HCT116 (cell line): ENCODE measurements at regions of chr21 and their contacts with region 1.

Region 1: DNA sequence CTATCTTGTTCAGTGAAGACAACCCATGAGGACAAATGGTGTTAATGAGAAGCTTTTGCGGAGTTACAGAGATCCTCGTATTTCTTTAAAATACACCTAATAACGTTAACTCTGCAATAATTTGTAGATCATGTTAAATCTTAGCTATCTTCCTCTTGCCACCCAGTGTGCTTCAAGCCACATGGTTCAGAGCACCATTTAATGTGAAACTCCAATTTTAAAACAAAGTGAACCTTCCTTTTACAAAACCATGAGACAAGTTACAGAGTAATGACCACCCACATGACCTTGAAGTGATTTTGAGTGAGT is 1.7 kb upstream of the KCNE2 start:
- DNase-seq: no peak
- ATAC-seq: peak; percentile 51
- H3K4me3 ChIP-seq: no peak overlapping the region
- H3K27ac ChIP-seq: no peak overlapping the region
- H3K4me1 ChIP-seq: peaks cover 4 to 7% of the 10 kb centered on the region in 2 experiments
- H3K27me3 ChIP-seq: no peaks in the 10 kb centered on the region
- CTCF ChIP-seq: no peak
- POLR2A ChIP-seq: no peak
- RAD21 ChIP-seq: no peak

Region 2: DNA sequence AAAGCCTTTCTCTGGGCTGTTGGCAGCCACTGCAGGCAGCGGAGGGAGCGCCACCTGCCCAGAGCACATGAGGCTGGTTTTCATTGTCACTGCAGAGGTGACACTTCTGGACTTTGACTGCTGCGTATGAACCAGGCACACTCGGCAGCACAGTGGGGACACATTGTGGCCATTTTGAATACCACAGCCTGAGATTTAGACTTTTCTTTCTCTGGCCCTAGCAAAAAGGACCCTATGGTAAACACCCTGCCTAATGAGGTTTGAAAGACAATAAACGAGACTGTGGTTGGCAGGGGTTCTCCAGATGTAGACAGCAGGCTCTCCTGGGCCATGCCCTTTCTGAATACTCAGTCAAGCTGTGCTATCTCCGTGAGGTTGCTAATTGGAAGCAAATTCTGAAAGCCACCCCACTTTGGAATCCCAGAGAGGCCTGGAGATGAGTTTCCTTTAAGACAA is 10.3 kb before region 1 on chr21:
- CTCF ChIA-PET with region 1: interaction called, 13 read pairs
- POLR2A ChIA-PET with region 1: no interaction called
- RAD21 ChIA-PET with region 1: no interaction called
- intact Hi-C with region 1: no loop called
- DNase-seq: peak; percentile 48
- ATAC-seq: peak; percentile 92
- H3K4me3 ChIP-seq: no peak overlapping the region
- H3K27ac ChIP-seq: no peak overlapping the region
- H3K4me1 ChIP-seq: peaks cover 0 to 4% of the 10 kb centered on the region in 2 experiments; a peak in 1 of 4 replicates
- H3K27me3 ChIP-seq: no peaks in the 10 kb centered on the region
- CTCF ChIP-seq: peak; percentile 63 to 70 (median 68); a peak in 5 of 6 replicates
- POLR2A ChIP-seq: no peak
- RAD21 ChIP-seq: peak; percentile 80

Region 3: DNA sequence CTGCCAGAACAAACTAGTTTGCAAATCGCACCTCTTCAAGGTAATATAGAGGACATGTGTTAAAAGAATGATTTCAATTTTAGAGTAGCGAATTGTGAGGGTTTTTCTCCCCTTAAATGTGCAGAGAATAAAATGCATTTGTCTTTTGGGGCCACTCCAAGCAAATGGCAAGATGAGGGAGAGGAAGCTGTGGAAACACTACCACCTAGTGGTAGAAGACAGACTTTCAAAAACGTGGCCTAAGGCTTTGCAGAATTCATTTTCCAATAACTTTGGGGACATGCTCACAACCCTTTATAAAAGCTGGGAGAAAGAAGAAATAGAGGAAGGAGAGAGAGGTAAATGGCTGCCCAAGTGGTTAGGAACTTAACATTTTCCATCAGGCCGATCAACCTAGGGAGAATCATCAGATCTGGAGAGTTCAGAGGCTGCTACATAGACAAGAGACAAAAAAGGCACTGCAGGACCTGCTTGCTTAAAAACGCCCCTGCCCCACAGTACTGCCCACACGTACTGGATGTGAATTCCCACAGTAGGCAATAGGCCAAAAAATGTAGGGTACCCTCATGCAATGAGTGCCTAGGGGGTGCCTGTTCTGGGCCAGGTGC is 268.6 kb after region 1 on chr21:
- CTCF ChIA-PET with region 1: interaction called, 7 read pairs
- POLR2A ChIA-PET with region 1: no interaction called
- RAD21 ChIA-PET with region 1: no interaction called
- intact Hi-C with region 1: loop called (anchors 1 kb)
- DNase-seq: peak; percentile 45
- ATAC-seq: peak; percentile 86
- H3K4me3 ChIP-seq: no peak overlapping the region
- H3K27ac ChIP-seq: no peak overlapping the region
- H3K4me1 ChIP-seq: no peaks in the 10 kb centered on the region
- H3K27me3 ChIP-seq: 0 out of 2 replicates have a peak, but pooled peaks cover 7% of the 10 kb centered on the region
- CTCF ChIP-seq: peak; percentile 79 to 86 (median 80); a peak in 5 of 6 replicates
- POLR2A ChIP-seq: no peak
- RAD21 ChIP-seq: peak; percentile 89